Activated B cell treated with CpG ODN at 0.5 μM for 24 hours (primary cell): ENCODE measurements at regions of chr14 and their contacts with region 1.

Region 1: GRCh38 chr14:89384023-89384422 is 33.0 kb downstream of the FOXN3 start:
- DNase-seq: peak; percentile 79
- ATAC-seq: peak; percentile 95
- H3K4me3 Mint-ChIP-seq: peak overlapping the region; percentile 36
- H3K27ac Mint-ChIP-seq: peak overlapping the region; percentile 87
- H3K4me1 Mint-ChIP-seq: peaks cover 79% of the 10 kb centered on the region
- H3K27me3 Mint-ChIP-seq: no peaks in the 10 kb centered on the region
- CTCF ChIP-seq: no peak

Region 2: DNA sequence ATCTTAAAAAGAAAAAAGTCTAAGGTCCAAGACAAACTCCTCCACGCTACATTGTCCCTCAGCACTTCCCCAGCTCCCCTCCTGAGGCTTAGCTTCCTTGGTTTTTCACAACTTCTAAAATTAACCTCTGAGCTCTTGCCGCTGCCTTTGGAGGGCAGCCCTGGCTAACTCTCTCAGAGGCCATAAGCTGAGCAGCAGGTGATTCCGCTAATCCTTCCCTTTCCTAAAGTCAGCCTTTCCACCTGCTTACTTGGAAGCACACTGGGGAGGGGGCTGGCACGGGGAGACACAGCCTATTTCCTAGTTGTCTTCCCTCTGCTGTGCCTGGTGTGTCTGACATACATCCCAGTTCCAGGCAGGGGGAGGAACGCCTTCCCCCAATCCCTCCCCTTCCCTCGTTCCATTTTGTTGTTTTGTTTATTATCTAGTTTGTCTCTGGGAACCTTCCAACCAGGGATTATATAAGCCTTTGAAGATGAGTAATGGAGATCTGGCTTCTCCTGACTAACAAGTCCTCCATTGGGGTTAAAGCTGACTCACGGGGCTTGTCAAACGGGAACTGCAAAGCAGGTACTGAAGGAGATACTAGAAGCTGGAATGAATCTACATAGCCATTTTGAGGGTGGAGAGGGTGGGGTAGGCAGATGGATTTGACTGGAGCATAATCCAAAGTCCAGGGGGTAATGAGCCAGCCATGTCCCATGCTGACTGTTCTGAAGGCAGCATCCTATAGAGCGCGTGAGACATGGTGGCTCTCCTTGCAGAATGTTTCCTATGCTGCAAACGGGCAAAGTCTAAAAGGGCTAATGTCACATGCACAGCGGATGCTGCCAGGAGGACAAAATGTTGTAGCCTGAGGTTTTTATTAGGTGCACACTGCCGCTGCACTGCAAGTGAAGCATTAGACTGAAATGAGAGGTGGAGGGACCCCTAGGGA is 197.8 kb before region 1 on chr14:
- CTCF ChIA-PET with region 1: no interaction called
- POLR2A ChIA-PET with region 1: interaction called, 9 read pairs
- intact Hi-C with region 1: loop called (anchors 1 kb)
- DNase-seq: no peak
- ATAC-seq: no peak
- H3K4me3 Mint-ChIP-seq: peak overlapping the region; percentile 69
- H3K27ac Mint-ChIP-seq: peak overlapping the region; percentile 91
- H3K4me1 Mint-ChIP-seq: peaks cover 41% of the 10 kb centered on the region
- H3K27me3 Mint-ChIP-seq: no peaks in the 10 kb centered on the region
- CTCF ChIP-seq: no peak

Region 3: DNA sequence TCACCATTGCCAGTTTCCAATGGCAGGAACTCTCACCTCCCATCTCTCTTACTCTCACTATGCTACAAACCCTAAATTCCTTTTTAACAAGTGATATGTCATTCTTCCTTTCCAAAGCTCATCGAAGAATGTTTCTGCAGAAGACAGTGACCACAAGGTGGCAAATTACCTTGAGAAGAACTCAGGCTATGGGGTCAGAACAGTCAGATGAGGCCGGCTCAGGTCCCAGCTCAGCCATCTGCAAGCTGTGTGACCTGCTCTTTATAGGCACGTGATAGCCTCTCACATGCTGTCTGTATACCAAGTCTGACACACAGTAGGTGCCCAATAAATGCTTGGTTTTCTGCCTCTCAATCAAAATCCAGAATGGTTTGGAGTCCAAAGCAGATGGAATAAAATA is 47.7 kb before region 1 on chr14:
- CTCF ChIA-PET with region 1: interaction called, 6 read pairs
- POLR2A ChIA-PET with region 1: interaction called, 4 read pairs
- intact Hi-C with region 1: loop called (anchors 1 kb)
- DNase-seq: no peak
- ATAC-seq: peak; percentile 69
- H3K4me3 Mint-ChIP-seq: no peak overlapping the region
- H3K27ac Mint-ChIP-seq: peak overlapping the region; percentile 66
- H3K4me1 Mint-ChIP-seq: peaks cover 71% of the 10 kb centered on the region
- H3K27me3 Mint-ChIP-seq: no peaks in the 10 kb centered on the region
- CTCF ChIP-seq: no peak

Region 4: DNA sequence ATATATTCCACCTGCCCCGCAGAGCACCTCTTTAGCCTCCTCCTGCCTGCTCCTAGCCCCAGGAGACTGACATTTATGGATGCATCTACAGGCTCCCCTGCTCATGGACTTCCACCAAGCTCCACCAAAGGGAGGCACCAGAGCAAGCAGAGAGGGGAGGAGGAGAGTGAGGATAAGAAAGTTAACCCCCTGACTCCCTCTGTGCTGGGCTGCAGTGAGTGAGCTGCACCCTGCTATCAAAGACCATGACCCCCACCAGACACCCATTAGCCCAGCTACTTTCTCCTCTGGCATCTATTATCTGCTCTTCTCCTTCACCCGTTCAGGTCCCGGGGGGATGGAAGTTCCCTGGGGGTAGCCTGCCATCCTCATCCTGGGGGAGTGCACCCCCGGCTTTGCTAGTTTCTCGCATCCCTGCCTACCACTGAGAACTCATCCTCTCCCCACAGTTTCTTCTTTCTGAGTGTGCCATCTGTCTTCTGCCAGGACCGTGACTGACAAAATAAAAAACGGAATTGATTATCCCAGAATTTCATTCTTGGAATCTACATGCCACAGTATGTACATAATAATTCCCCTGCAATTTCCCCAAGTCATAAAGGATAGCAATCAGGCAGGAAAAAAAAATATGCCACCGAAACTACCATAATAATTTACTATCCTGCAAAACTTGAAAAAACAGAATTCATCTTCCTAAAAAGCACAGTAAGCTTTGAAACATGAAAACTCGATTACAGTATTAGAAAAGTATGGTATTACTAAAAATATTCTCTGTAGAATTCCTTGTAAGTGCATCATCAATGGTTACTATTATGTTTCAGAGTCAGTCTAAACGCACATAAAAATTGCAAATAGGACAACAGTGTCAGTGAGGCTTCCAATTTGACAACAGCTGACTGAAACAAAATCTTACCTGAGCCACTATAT is 12.2 kb before region 1 on chr14:
- CTCF ChIA-PET with region 1: interaction called, 3 read pairs
- POLR2A ChIA-PET with region 1: interaction called, 20 read pairs
- intact Hi-C with region 1: loop called (anchors 1 kb)
- DNase-seq: no peak
- ATAC-seq: peak; percentile 22
- H3K4me3 Mint-ChIP-seq: peak overlapping the region; percentile 42
- H3K27ac Mint-ChIP-seq: peak overlapping the region; percentile 67
- H3K4me1 Mint-ChIP-seq: peaks cover 70% of the 10 kb centered on the region
- H3K27me3 Mint-ChIP-seq: no peaks in the 10 kb centered on the region
- CTCF ChIP-seq: no peak

Region 5: DNA sequence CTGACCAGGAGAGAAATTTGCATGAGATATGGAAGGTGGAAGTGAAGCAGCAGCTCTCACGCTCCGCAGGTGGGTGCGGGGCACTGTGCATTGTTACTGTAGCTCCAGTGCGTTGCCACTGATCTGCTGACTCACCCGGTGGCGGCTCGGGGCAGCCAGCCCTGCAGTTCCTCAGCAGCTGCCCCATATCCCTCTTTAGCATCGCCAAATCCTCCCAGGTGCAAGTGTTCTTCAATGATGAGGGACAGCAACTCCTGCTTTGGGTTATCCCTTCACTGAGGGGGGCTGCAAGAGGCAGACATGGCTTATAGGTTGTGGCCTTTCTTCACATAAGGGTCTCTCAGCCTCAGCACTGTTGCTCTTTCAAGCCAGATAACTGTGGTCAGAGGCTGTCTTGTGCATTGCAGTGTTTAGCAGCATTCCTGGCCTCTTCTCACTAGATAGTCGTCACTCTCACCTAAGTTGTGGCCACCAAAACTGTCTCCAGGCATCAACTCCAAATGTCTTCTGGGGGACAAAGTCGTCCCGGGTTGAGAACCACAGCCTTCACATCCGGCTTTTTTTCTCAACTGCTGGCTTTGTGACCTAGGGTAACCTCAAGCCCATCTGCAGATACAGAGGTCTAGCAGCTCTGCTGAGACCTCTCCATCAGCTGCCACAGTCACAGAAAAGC is 389.8 kb after region 1 on chr14:
- CTCF ChIA-PET with region 1: interaction called, 3 read pairs
- POLR2A ChIA-PET with region 1: no interaction called
- intact Hi-C with region 1: loop called (anchors 1 kb)
- DNase-seq: peak; percentile 35
- ATAC-seq: peak; percentile 93
- H3K4me3 Mint-ChIP-seq: peak overlapping the region; percentile 45
- H3K27ac Mint-ChIP-seq: no peak overlapping the region
- H3K4me1 Mint-ChIP-seq: peaks cover 26% of the 10 kb centered on the region
- H3K27me3 Mint-ChIP-seq: peaks cover 1% of the 10 kb centered on the region
- CTCF ChIP-seq: no peak